Ovary (tissue), 10 donors: ENCODE measurements at regions of chr15 and their contacts with region 1.

Region 1: DNA sequence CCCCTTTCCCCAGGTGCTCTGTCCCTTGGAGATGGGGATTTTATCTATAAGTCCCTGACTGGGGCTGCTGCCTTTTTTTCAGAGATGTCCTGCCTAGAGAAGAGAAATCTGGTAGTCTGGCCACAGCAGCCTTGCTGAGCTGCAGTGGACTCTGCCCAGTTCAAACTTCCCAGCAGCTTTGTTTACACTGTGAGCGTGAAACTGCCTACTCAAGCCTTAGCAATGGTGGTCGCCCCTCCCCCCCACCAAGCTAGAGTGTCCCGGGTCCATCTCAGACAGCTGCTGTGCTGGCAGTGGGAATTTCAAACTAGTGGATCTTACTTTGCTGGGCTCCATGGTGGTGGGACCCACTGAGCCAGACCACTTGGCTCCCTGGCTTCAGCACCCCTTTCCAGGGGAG is 38.9 kb downstream of the TMEM266 start:
- DNase-seq: no peak
- H3K4me3 ChIP-seq: no peak overlapping the region
- H3K27ac ChIP-seq: no peak overlapping the region
- H3K4me1 ChIP-seq: no peaks in the 10 kb centered on the region
- H3K27me3 ChIP-seq: no peaks in the 10 kb centered on the region
- CTCF ChIP-seq: no peak
- EP300 ChIP-seq: no peak
- POLR2A ChIP-seq: no peak

Region 2: DNA sequence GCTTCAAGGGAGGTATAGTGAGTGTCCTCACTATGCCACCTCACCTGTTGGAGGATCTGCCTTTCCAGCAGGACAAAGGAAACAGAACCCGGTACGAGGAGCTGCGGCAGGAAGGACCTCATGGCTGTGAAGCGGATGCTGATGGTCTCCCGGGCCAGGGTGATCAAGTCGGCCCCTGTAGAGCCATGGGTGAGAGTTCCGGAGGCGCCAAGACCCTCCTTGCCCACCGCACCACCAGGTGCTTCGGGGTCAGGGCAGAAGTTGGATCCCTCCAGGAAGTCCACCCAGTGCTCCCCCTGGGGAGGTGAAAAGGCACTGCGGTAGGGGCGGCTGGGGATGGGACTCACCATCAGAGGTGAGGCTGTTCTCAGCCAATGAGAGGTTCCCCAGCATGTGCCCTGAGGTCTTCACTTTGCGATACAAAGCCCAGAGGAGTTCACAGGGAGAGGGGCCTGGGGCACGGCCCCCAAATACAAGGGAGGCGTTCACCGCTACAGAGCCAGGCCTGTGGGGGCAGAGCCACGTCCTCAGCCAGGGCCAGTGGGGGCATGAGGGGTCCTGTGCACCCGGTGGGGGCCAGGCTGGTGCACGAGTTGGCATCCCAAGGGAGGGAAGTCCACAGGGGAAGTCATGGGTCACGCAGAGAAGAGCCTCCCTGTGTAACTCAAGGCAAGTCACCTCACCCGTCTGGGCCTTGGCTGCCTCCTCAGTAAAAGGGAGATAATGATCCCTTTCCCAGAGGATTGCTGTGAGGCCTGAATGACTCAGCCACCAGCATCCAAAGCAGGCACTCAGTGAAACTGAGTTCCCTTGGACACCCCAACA is 869.3 kb before region 1 on chr15:
- intact Hi-C with region 1: no loop called
- DNase-seq: peak in 1 of 5 donors; percentile 29
- H3K4me3 ChIP-seq: no peak overlapping the region
- H3K27ac ChIP-seq: no peak overlapping the region
- H3K4me1 ChIP-seq: no peaks in the 10 kb centered on the region
- H3K27me3 ChIP-seq: no peaks in the 10 kb centered on the region
- CTCF ChIP-seq: no peak
- EP300 ChIP-seq: no peak
- POLR2A ChIP-seq: no peak

Region 3: GRCh38 chr15:76217029-76217428 is 118.3 kb after region 1 on chr15:
- intact Hi-C with region 1: no loop called
- DNase-seq: no peak
- H3K4me3 ChIP-seq: no peak overlapping the region
- H3K27ac ChIP-seq: no peak overlapping the region
- H3K4me1 ChIP-seq: no peaks in the 10 kb centered on the region
- H3K27me3 ChIP-seq: no peaks in the 10 kb centered on the region
- CTCF ChIP-seq: no peak
- EP300 ChIP-seq: no peak
- POLR2A ChIP-seq: no peak

Region 4: DNA sequence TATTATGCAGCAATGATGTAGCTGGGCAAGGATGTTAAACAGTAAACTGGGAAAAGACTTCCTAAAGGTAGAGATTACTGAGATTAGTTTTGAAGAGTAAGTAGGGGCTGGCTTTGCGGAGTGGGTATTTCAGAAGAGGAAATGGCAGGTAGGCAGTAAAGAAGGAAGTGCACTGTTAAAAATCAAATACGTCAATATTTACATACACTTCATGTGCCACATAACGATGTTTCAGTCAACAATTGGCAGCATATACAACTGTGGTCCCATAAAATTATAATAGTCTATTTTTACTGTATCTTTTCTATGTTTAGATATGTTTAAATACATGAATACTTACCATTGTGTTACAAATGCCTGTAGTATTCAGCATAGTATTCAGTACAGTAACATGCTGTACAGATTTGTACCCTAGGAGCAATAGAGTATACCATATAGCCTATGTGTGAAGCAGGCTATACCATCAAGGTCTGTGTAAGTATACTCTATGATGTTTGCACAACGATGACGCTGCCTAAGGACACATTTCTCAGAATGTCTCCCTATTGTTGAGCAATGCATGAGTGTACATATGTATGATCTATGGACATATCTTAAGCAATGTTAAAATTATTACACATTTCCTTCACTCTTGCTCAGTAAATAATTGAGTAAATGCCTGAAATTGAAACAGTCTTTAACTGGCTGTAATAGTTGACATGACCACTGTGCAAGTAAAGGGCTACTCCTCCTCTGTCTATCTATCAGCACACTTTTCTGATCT is 434.6 kb after region 1 on chr15:
- intact Hi-C with region 1: loop called in 1 of 4 experiments (anchors 5 kb)
- DNase-seq: no peak
- H3K4me3 ChIP-seq: no peak overlapping the region
- H3K27ac ChIP-seq: no peak overlapping the region
- H3K4me1 ChIP-seq: no peaks in the 10 kb centered on the region
- H3K27me3 ChIP-seq: no peaks in the 10 kb centered on the region
- CTCF ChIP-seq: no peak
- EP300 ChIP-seq: no peak
- POLR2A ChIP-seq: no peak